ENCODE measurements at regions of chr12 and their contacts with region 1.

Region 1: DNA sequence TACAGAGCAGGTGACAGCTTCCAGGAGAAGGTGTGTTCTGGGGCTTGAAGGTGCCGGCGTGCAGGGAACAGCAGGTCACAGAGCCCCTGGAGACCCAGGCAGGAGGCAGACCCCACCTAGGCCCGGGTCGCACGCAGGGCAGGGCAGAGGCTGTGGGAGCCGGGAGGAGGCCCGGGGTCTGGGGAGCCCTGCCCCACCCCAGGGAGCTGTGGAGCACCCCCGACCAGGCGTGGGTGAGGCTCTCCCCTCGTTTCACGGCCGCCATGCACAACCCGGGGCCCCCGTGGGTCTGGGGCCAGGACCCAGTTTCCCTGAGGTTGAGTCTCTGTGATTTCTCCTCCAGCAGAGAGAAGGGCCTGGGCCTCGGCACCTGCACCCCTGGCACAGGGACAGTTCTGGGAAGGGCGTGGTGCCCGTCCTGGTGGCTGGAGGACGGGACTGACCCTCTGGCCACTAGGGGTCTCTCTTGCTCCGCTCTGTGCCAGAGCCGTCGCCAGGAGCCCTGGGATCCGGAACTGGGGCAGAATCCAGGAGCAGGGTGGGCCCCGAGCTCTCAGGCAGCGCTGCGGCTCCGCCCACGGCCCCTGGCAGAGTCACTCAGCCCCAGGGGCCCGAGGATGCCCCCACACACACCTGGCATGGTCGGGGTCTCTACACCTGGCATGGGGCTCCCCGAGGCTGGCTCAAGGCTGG is 75.2 kb upstream of the FBRSL1 start:
- DNase-seq: peak in 1 of 2 experiments; percentile 93
- H3K4me3 ChIP-seq: no peak overlapping the region
- H3K27ac ChIP-seq: no peak overlapping the region
- H3K4me1 ChIP-seq: peaks cover 0 to 2% (median 0%) of the 10 kb centered on the region in 4 experiments; a peak in 2 of 7 replicates
- H3K27me3 ChIP-seq: peaks cover 11 to 41% (median 33%) of the 10 kb centered on the region in 4 experiments; a peak in 6 of 7 replicates
- CTCF ChIP-seq: peak in 2 of 3 experiments; percentile 92 to 96; a peak in 3 of 4 replicates
- EP300 ChIP-seq: no peak
- POLR2A ChIP-seq: no peak
- RAD21 ChIP-seq: peak; percentile 97 to 99

Region 2: DNA sequence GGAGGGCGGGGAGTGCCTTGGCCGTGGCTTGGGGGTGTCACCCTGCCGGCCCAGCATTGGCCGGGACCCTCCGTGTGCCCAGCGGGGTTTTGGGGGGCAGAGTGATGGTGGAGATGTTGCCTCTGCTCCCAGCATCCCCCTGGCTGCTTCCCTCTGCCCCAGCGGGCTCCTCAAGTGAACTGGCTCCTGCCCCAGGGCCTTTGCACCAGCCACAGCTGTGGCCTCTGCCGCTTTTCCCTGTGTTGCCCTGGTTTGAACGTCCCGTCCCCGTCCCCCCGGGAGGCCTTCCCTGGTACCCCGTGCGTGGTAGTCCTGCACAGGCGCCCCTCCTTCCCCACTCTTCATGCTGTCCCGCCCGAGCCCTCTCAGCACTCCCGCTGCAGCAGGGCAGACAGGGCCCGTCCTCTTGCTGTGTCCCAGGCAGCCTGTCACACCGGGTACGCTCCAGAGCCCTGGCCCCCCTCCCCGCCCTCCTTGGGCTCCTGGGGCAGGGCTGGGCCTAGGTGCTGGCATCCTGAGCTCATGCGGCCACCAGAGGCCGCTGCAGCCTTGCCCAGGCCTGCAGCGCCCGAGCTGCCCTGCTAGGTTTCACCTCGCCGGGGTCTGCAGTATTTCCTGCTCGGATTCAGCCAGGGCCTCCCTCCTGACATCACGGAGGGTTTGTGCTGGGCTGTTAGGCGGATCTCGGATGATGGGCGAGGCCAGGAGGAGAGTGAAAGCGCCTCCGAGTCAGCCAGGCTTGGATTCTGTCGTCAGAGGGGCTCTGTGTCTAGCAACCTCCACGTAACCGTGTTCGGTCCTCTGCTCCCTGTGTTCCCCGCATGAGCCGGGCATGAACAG is 261.1 kb before region 1 on chr12:
- CTCF ChIA-PET with region 1: interaction called, 10 read pairs
- POLR2A ChIA-PET with region 1: no interaction called
- DNase-seq: peak; percentile 77 to 85
- H3K4me3 ChIP-seq: no peak overlapping the region
- H3K27ac ChIP-seq: no peak overlapping the region
- H3K4me1 ChIP-seq: peaks cover 0 to 3% (median 1%) of the 10 kb centered on the region in 4 experiments; a peak in 4 of 7 replicates
- H3K27me3 ChIP-seq: no peaks in the 10 kb centered on the region; a peak in 2 of 7 replicates
- CTCF ChIP-seq: peak in 2 of 3 experiments; percentile 96 to 98; a peak in 3 of 4 replicates
- EP300 ChIP-seq: no peak
- POLR2A ChIP-seq: no peak
- RAD21 ChIP-seq: peak; percentile 96 to 100

Region 3: DNA sequence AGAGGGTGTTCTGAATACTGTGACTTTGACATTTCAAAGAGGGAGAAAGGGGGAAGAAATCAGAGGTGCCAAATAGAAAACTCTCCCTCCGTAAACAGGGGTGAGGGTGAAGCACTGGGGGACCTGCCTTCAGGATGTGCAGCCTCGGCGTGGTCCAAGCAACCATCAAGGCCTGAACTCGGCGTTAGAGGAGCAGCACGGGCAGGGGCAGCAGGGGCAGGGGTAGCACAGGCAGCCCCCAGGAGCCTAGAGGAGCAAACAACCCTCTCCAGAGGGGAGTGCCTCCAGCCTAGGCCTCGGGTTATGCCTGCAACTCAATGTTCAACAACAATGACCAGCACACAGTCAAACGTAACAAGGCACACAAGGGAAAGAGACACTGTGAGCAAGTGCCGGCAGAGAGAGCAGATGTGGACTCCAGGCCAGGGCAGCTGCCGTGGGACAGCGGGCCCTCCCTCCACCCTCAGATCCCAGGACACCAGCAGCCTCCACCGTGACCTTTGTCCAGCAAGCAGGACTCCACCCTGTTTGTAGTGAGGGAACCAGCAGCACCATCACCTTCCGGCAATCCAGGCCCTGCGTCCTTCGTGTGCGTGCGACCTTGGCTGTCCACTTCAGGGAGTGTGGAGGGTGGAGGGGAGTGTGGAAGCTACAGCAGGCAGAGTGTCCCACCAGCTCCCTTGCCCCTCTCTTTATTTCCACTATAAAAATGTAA is 103.4 kb before region 1 on chr12:
- CTCF ChIA-PET with region 1: no interaction called
- POLR2A ChIA-PET with region 1: no interaction called
- DNase-seq: no peak
- H3K4me3 ChIP-seq: no peak overlapping the region
- H3K27ac ChIP-seq: no peak overlapping the region
- H3K4me1 ChIP-seq: no peaks in the 10 kb centered on the region
- H3K27me3 ChIP-seq: peaks cover 2 to 9% (median 6%) of the 10 kb centered on the region in 4 experiments; a peak in 5 of 7 replicates
- CTCF ChIP-seq: no peak
- EP300 ChIP-seq: no peak
- POLR2A ChIP-seq: no peak
- RAD21 ChIP-seq: no peak

Region 4: GRCh38 chr12:132379996-132380395 is 34.8 kb before region 1 on chr12:
- CTCF ChIA-PET with region 1: interaction called, 21 read pairs
- POLR2A ChIA-PET with region 1: no interaction called
- DNase-seq: no peak
- H3K4me3 ChIP-seq: no peak overlapping the region
- H3K27ac ChIP-seq: no peak overlapping the region
- H3K4me1 ChIP-seq: peaks cover 0 to 14% (median 3%) of the 10 kb centered on the region in 4 experiments; a peak in 6 of 7 replicates
- H3K27me3 ChIP-seq: peaks cover 16 to 72% (median 54%) of the 10 kb centered on the region in 4 experiments
- CTCF ChIP-seq: no peak
- EP300 ChIP-seq: no peak
- POLR2A ChIP-seq: no peak
- RAD21 ChIP-seq: no peak

Region 5: GRCh38 chr12:132429946-132430643 is 15.3 kb after region 1 on chr12:
- CTCF ChIA-PET with region 1: interaction called, 43 read pairs
- POLR2A ChIA-PET with region 1: no interaction called
- DNase-seq: peak in 1 of 2 experiments; percentile 61
- H3K4me3 ChIP-seq: peak overlapping the region in 1 of 4 experiments; percentile 9; a peak in 1 of 8 replicates
- H3K27ac ChIP-seq: no peak overlapping the region
- H3K4me1 ChIP-seq: peaks cover 0 to 35% (median 21%) of the 10 kb centered on the region in 4 experiments; a peak in 6 of 7 replicates
- H3K27me3 ChIP-seq: peaks cover 14 to 64% (median 58%) of the 10 kb centered on the region in 4 experiments
- CTCF ChIP-seq: no peak
- EP300 ChIP-seq: no peak
- POLR2A ChIP-seq: no peak
- RAD21 ChIP-seq: no peak

Region 6: DNA sequence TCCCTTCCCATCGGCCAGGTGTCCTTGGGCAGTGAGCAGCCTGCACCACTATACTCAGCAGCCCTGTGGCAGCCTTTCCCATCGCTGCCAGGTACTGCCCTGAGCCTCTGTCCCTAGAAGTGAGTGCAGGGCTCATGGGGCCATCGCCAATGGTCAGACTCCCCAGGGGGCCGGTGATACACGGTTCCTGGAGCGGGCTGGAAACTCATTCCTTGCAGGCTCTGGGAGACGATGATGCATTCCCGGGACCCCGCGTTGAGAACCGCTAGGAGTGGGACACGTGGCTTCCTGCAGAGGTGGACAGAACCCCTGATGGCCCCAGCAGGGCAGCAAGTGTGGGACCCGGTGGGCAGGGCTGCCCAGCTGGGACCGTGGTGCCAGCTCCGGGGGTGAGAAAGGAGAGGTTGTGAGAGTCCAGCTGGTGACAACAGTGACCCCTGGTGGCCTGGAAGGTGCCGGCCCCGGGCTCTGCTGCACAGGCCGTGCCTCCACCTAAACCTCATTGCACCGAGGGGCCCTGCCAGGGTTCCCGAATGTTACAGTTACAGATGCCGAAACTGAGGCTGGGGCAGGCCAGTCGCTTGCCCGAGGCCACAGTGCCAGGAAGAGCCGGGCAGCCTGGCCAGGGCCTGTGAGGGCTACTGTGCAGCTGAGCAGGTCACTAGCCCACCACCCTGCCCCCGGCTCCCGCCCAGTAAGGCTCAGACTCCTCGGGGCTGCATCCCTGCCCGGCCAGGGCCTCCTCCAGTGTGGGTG is 109.0 kb after region 1 on chr12:
- CTCF ChIA-PET with region 1: interaction called, 83 read pairs
- POLR2A ChIA-PET with region 1: no interaction called
- DNase-seq: peak in 1 of 2 experiments; percentile 94
- H3K4me3 ChIP-seq: no peak overlapping the region
- H3K27ac ChIP-seq: no peak overlapping the region
- H3K4me1 ChIP-seq: peaks cover 0 to 15% (median 11%) of the 10 kb centered on the region in 4 experiments; a peak in 6 of 7 replicates
- H3K27me3 ChIP-seq: peaks cover 0 to 24% (median 18%) of the 10 kb centered on the region in 4 experiments; a peak in 6 of 7 replicates
- CTCF ChIP-seq: peak in 2 of 3 experiments; percentile 78 to 89; a peak in 3 of 4 replicates
- EP300 ChIP-seq: no peak
- POLR2A ChIP-seq: no peak
- RAD21 ChIP-seq: peak; percentile 67 to 76

Region 7: DNA sequence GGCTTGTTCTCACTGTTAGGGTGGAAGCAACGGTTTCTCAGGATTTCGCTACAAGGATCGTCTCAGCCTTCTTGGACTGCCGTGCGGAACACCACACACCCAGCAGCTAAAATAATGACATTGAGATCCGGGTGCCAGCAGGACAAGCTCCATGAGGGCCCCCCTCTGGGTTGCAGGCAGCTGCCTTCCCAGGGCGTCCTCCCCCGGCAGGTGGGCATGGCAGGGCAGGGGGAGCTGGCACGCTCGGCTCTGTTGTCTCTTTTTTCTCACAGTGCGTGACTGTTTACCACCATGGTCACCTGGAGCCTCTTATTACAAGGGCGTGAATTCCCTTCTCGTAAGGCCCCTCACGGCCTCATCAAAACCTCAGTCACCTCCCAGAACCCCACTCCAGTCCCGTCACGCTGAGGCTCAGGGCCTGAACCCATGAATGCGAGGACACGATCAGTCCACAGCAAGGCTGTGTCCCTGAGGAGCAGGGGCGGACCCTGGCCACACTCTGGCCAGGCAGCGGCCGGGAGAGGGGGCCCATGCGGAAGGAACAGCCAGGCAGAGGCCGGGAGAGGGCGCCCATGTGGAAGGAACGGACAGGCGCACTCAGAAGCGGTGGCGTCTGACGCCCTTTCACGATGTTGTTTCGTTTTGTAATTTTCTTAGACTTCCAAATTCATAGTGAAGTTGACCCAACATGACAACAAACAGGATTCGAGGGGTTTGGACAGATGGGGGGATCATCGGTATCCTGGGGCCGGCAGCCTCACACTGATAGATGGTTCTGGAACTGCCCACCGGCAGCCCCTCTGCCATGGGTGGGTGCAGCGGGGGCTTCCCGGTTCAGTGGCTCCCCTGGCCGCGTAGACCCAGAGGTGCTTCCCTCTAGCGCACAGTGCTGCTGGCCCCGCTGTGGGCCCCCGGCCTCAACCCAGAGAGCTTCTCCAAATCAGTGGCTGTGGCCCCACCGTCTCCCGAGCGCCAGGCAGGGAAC is 185.6 kb after region 1 on chr12:
- CTCF ChIA-PET with region 1: interaction called, 13 read pairs
- POLR2A ChIA-PET with region 1: no interaction called
- DNase-seq: peak in 1 of 2 experiments; percentile 81
- H3K4me3 ChIP-seq: peak overlapping the region in 1 of 4 experiments; percentile 23; a peak in 1 of 8 replicates
- H3K27ac ChIP-seq: no peak overlapping the region
- H3K4me1 ChIP-seq: peaks cover 0 to 6% (median 2%) of the 10 kb centered on the region in 4 experiments; a peak in 4 of 7 replicates
- H3K27me3 ChIP-seq: peaks cover 12 to 65% (median 55%) of the 10 kb centered on the region in 4 experiments
- CTCF ChIP-seq: peak in 2 of 3 experiments; percentile 81 to 92; a peak in 3 of 4 replicates
- EP300 ChIP-seq: no peak
- POLR2A ChIP-seq: no peak
- RAD21 ChIP-seq: peak; percentile 74 to 83

Region 8: GRCh38 chr12:132651444-132652100 is 236.8 kb after region 1 on chr12:
- CTCF ChIA-PET with region 1: no interaction called
- POLR2A ChIA-PET with region 1: no interaction called
- DNase-seq: no peak
- H3K4me3 ChIP-seq: no peak overlapping the region
- H3K27ac ChIP-seq: no peak overlapping the region
- H3K4me1 ChIP-seq: no peaks in the 10 kb centered on the region
- H3K27me3 ChIP-seq: no peaks in the 10 kb centered on the region
- CTCF ChIP-seq: no peak
- EP300 ChIP-seq: no peak
- POLR2A ChIP-seq: no peak
- RAD21 ChIP-seq: no peak

Measured in H1 (cell line).